B cell (primary cell): ENCODE measurements at regions of chr19 and their contacts with region 1.

Region 1: GRCh38 chr19:51338563-51339312 is 3.2 kb downstream of the VSIG10L start:
- DNase-seq: peak; percentile 93
- ATAC-seq: peak; percentile 60
- H3K4me3 ChIP-seq: peak overlapping the region; percentile 11 to 77 (median 58)
- H3K4me3 Mint-ChIP-seq: peak overlapping the region; percentile 97
- H3K27ac ChIP-seq: no peak overlapping the region
- H3K27ac Mint-ChIP-seq: peak overlapping the region; percentile 80
- H3K4me1 ChIP-seq: peaks cover 22 to 42% of the 10 kb centered on the region in 2 donors
- H3K4me1 Mint-ChIP-seq: peaks cover 36% of the 10 kb centered on the region
- H3K27me3 ChIP-seq: no peaks in the 10 kb centered on the region
- H3K27me3 Mint-ChIP-seq: no peaks in the 10 kb centered on the region
- CTCF ChIP-seq: peak; percentile 87

Region 2: GRCh38 chr19:51181913-51182419 is 156.8 kb before region 1 on chr19:
- CTCF ChIA-PET with region 1: no interaction called
- POLR2A ChIA-PET with region 1: no interaction called
- intact Hi-C with region 1: no loop called
- DNase-seq: no peak
- ATAC-seq: no peak
- H3K4me3 ChIP-seq: no peak overlapping the region
- H3K4me3 Mint-ChIP-seq: no peak overlapping the region
- H3K27ac ChIP-seq: no peak overlapping the region
- H3K27ac Mint-ChIP-seq: no peak overlapping the region
- H3K4me1 ChIP-seq: no peaks in the 10 kb centered on the region
- H3K4me1 Mint-ChIP-seq: no peaks in the 10 kb centered on the region
- H3K27me3 ChIP-seq: peaks cover 0 to 3% (median 0%) of the 10 kb centered on the region in 4 experiments
- H3K27me3 Mint-ChIP-seq: peaks cover 31% of the 10 kb centered on the region
- CTCF ChIP-seq: no peak

Region 3: DNA sequence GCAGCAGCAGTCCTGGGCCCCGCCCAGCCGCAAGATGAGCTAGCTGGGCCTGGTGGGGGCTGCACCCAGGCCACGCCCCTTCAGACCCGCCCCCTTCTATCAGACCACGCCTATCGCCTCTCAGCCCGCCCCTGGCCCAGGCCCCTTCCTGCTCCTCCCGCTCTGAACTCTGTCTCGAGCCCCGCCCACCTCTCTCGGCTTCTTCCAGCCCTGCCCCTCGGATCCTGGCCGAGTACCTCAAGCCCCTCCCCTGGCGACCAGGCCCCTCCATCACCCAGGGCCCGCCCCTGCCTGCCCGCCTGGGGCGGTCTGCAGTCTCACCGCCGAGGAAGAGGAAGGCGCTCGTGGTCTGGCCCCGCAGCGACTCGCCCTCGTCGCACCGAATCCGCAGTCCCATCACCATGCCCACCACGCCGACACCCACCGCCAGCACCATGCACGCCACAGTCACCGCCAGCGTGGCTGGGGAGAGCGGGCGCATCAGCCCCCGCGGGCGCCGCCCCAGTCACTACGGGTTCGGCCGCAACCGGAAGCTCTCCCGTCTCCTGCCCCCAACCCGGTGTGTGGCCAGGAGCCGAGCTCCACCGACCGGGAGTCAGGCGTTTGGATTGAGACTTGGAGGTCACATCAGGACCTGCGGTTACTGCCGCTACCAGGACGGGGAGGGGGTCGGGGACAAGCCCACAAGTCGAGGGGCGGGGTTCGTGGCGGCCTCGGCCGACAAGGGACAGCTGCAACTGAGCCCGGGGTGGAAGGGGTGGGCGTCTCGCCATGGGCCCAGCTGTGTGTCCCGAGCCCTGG is 29.0 kb after region 1 on chr19:
- CTCF ChIA-PET with region 1: interaction called, 5 read pairs
- POLR2A ChIA-PET with region 1: interaction called, 10 read pairs
- intact Hi-C with region 1: loop called (anchors 1 kb)
- DNase-seq: peak; percentile 98
- ATAC-seq: peak; percentile 85
- H3K4me3 ChIP-seq: peak overlapping the region; percentile 73 to 94 (median 78)
- H3K4me3 Mint-ChIP-seq: peak overlapping the region; percentile 97
- H3K27ac ChIP-seq: peak overlapping the region; percentile 80 to 87
- H3K27ac Mint-ChIP-seq: peak overlapping the region; percentile 95
- H3K4me1 ChIP-seq: peaks cover 5 to 36% of the 10 kb centered on the region in 2 donors
- H3K4me1 Mint-ChIP-seq: peaks cover 37% of the 10 kb centered on the region
- H3K27me3 ChIP-seq: no peaks in the 10 kb centered on the region
- H3K27me3 Mint-ChIP-seq: no peaks in the 10 kb centered on the region
- CTCF ChIP-seq: no peak

Region 4: DNA sequence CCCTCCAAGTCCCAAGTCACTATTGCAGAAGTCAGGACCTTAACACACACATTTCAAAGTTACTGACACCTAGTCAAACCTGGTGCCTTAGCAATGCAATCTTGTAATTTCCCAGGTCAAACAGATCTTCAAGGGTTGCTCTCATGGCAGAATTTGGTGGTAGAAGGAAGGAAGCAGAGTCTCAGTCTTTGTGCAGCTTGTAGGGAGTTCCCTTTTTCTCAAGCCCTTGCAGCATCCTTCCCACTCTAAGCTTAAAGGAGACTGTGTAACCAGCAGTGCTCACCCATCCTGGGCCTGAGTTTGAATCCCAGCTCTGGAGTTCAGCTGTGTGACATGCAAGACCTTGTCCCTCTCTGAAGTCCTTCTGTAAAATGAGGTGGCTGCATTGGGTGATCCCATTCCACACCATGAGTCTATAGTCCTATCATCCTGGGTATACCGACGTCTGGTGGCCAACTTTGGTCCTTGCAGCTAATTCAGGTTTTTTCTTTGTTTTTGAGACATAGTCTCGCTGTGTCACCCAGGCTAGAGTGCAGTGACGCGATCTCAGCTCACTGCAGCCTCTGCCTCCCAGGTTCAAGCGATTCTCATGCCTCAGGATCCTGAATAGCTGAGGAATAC is 68.9 kb after region 1 on chr19:
- CTCF ChIA-PET with region 1: interaction called, 30 read pairs
- POLR2A ChIA-PET with region 1: no interaction called
- intact Hi-C with region 1: loop called (anchors 2 kb)
- DNase-seq: peak; percentile 60
- ATAC-seq: peak; percentile 76
- H3K4me3 ChIP-seq: no peak overlapping the region
- H3K4me3 Mint-ChIP-seq: no peak overlapping the region
- H3K27ac ChIP-seq: peak overlapping the region in 1 of 2 donors; percentile 48
- H3K27ac Mint-ChIP-seq: no peak overlapping the region
- H3K4me1 ChIP-seq: peaks cover 22 to 30% of the 10 kb centered on the region in 2 donors
- H3K4me1 Mint-ChIP-seq: peaks cover 20% of the 10 kb centered on the region
- H3K27me3 ChIP-seq: no peaks in the 10 kb centered on the region
- H3K27me3 Mint-ChIP-seq: no peaks in the 10 kb centered on the region
- CTCF ChIP-seq: peak; percentile 63

Region 5: GRCh38 chr19:51441410-51442390 is 103.0 kb after region 1 on chr19:
- CTCF ChIA-PET with region 1: interaction called, 70 read pairs
- POLR2A ChIA-PET with region 1: no interaction called
- intact Hi-C with region 1: loop called (anchors 1 kb)
- DNase-seq: peak; percentile 88
- ATAC-seq: peak; percentile 89
- H3K4me3 ChIP-seq: peak overlapping the region; percentile 5 to 41 (median 37)
- H3K4me3 Mint-ChIP-seq: peak overlapping the region; percentile 71
- H3K27ac ChIP-seq: peak overlapping the region; percentile 61 to 71
- H3K27ac Mint-ChIP-seq: peak overlapping the region; percentile 83
- H3K4me1 ChIP-seq: peaks cover 20 to 32% of the 10 kb centered on the region in 2 donors
- H3K4me1 Mint-ChIP-seq: peaks cover 32% of the 10 kb centered on the region
- H3K27me3 ChIP-seq: peaks cover 0 to 15% (median 3%) of the 10 kb centered on the region in 4 experiments
- H3K27me3 Mint-ChIP-seq: peaks cover 20% of the 10 kb centered on the region
- CTCF ChIP-seq: peak; percentile 22

Region 6: DNA sequence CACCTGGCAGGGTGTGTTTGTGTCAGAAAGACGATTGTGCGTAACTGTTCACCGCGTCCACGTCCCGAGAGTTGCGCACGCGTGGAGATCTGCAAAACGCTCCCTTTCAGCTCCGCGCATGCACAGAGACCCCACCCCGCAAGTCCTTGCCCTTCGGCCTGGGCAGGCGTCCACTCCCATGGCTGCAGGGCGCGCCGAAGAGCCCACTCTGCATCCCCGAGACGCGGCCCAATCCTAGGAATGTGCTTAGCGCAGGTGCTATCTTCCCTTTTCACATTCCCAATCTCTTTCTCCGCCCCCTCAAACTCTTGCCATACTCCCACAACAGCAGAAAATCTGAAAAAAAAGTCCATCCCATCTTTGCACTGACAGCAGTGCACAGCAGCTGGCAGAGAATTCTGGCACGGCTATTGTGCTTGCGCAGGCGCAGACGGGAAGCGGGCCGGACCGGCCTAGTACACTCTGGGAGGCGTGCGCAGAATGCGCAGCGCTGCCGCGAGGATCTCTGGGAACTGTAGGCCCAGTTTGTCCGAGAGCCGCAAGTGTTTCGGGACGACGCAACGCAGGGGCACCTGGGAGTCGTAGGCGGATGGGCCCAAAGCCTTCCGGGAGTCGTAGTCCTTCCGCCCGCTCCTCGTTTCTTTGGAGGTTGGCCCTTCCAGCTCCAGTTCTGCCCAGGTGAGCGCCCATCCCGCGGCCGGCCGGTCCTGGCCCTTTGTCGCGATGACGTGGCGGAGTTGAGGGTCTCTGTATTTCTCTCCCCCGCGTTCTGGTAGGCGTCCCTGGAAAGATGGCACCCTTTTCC is 255.4 kb after region 1 on chr19:
- CTCF ChIA-PET with region 1: no interaction called
- POLR2A ChIA-PET with region 1: no interaction called
- intact Hi-C with region 1: loop called (anchors 2 kb)
- DNase-seq: peak; percentile 97
- ATAC-seq: peak; percentile 100
- H3K4me3 ChIP-seq: peak overlapping the region; percentile 53 to 92 (median 88)
- H3K4me3 Mint-ChIP-seq: peak overlapping the region; percentile 92
- H3K27ac ChIP-seq: peak overlapping the region; percentile 19 to 55
- H3K27ac Mint-ChIP-seq: peak overlapping the region; percentile 84
- H3K4me1 ChIP-seq: peaks cover 16 to 21% of the 10 kb centered on the region in 2 donors
- H3K4me1 Mint-ChIP-seq: peaks cover 25% of the 10 kb centered on the region
- H3K27me3 ChIP-seq: no peaks in the 10 kb centered on the region
- H3K27me3 Mint-ChIP-seq: no peaks in the 10 kb centered on the region
- CTCF ChIP-seq: no peak